Right ventricle myocardium superior (tissue), 1 donor: ENCODE measurements at regions of chr2 and their contacts with region 1.

Region 1: GRCh38 chr2:109128048-109128465 is 948 bp upstream of the SH3RF3 start:
- DNase-seq: peak; percentile 89
- ATAC-seq: peak; percentile 92

Region 2: DNA sequence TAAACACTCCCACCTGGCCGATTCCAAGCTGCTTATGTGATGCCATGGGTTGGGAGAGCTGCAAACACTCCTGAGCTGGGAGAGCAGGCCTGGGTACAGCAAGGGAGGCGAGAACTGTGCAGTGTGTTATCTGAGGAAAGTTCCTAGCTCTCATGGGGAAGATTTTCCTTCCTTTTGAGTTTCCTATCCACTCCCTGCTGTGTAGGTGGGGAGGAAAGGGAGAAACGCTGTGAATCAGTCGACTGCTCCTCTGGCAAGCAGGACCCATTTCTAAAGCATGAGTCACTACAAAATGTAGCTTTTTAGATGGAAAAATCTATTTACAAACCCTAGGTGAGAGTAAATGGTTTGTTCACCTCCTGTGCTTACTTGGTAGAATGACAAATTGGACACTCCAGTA is 81.4 kb after region 1 on chr2:
- intact Hi-C with region 1: loop called (anchors 10 kb)
- DNase-seq: no peak
- ATAC-seq: peak; percentile 18

Region 3: GRCh38 chr2:109510136-109511028 is 382.3 kb after region 1 on chr2:
- intact Hi-C with region 1: loop called (anchors 2 kb)
- DNase-seq: peak; percentile 85
- ATAC-seq: peak; percentile 83